IMR-90 (cell line): ENCODE measurements at regions of chr16 and their contacts with region 1.

Region 1: GRCh38 chr16:75456971-75457370 is 7.5 kb downstream of the TMEM170A start:
- DNase-seq: no peak
- ATAC-seq: no peak
- H3K4me3 ChIP-seq: no peak overlapping the region
- H3K27ac ChIP-seq: no peak overlapping the region
- H3K4me1 ChIP-seq: no peaks in the 10 kb centered on the region; the same call in 1 of the 2 replicates
- H3K27me3 ChIP-seq: no peaks in the 10 kb centered on the region
- CTCF ChIP-seq: no peak
- POLR2A ChIP-seq: no peak
- RAD21 ChIP-seq: no peak

Region 2: DNA sequence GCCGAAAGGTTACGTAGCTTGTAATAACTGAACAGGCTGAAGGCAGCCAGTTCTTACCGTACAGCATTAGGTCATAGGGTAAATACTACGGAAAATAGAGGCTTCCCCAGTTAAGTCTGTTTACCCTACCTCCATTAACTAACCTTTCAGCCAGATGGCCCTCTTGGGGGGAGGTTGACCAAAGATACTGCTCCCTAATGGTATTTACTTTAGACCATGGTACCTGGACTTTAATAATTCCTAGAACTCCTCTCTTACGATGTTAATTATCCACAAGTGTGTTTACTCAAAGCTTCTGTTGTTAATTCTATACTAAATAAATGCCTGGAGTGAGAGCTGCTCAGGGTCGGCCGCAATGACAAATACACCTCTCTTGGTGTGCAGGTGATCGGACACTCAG is 175.9 kb after region 1 on chr16:
- CTCF ChIA-PET with region 1: no interaction called
- POLR2A ChIA-PET with region 1: interaction called, 10 read pairs
- dilution Hi-C with region 1: no loop called
- in situ Hi-C with region 1: no loop called
- intact Hi-C with region 1: loop called (anchors 10 kb)
- DNase-seq: no peak
- ATAC-seq: no peak
- H3K4me3 ChIP-seq: no peak overlapping the region
- H3K27ac ChIP-seq: no peak overlapping the region
- H3K4me1 ChIP-seq: no peaks in the 10 kb centered on the region
- H3K27me3 ChIP-seq: no peaks in the 10 kb centered on the region
- CTCF ChIP-seq: no peak
- POLR2A ChIP-seq: no peak
- RAD21 ChIP-seq: no peak